Panc1 (cell line): ENCODE measurements at regions of chrX and their contacts with region 1.

Region 1: DNA sequence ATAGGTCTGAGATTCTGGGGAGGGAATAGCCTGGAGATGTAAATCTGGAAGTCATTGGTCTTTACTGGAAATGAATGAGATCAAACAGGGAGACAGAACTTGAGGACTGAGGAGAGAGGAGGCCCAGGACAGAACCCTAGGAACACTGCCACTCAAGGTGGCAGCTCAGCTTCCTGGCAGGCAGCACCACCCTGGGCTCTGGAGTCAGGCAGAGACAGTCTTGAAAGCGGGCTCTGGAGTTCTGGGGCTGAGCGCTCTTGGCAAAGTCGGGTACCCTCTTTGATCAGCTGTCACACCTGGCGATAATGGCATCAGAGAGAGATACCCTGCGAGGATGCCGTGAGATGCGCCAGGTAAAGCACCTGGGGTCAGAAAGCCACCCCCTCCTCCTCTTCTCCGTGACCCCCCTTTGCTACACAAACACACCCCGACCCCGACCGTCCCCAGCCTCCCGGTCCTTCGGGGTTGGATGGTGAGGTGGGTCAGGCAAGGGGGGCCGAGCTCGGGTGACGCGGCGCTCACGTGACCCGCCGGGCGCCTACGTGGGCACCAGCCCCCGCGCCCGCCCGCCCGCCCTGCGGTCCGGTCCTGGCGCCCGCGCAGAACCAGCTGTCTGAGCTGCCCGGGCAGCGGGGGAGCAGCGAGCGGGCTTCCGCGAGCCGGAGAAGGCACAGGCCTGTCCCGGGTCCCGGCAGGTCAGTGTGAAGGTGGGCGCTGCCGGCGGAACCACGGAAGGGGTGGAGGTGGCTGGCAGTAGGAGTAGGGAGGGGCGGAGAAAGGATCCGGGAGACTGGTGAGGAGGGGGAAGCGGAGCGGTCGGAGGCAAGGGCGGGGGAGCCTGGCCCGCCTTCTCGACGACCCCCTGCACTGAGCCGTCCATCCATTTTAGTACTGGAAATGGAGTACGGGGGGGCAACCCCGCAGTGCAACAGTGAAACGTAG is at the start of gene TCEAL3:
- DNase-seq: no peak
- ATAC-seq: peak; percentile 91
- H3K4me3 ChIP-seq: peak within 1 kb of the TSS; percentile 62 to 87
- H3K27ac ChIP-seq: peak within 1 kb of the TSS; percentile 79
- H3K4me1 ChIP-seq: peaks cover 9% of the 10 kb centered on the region
- H3K27me3 ChIP-seq: no peaks in the 10 kb centered on the region
- CTCF ChIP-seq: no peak
- total RNA-seq, gene TCEAL3: 23.8 TPM

Region 2: GRCh38 chrX:103549916-103550315 is 57.7 kb before region 1 on chrX:
- CTCF ChIA-PET with region 1: no interaction called
- POLR2A ChIA-PET with region 1: no interaction called
- in situ Hi-C with region 1: no loop called
- intact Hi-C with region 1: no loop called
- DNase-seq: no peak
- ATAC-seq: no peak
- H3K4me3 ChIP-seq: no peak overlapping the region
- H3K27ac ChIP-seq: no peak overlapping the region
- H3K4me1 ChIP-seq: no peaks in the 10 kb centered on the region
- H3K27me3 ChIP-seq: no peaks in the 10 kb centered on the region
- CTCF ChIP-seq: no peak

Region 3: DNA sequence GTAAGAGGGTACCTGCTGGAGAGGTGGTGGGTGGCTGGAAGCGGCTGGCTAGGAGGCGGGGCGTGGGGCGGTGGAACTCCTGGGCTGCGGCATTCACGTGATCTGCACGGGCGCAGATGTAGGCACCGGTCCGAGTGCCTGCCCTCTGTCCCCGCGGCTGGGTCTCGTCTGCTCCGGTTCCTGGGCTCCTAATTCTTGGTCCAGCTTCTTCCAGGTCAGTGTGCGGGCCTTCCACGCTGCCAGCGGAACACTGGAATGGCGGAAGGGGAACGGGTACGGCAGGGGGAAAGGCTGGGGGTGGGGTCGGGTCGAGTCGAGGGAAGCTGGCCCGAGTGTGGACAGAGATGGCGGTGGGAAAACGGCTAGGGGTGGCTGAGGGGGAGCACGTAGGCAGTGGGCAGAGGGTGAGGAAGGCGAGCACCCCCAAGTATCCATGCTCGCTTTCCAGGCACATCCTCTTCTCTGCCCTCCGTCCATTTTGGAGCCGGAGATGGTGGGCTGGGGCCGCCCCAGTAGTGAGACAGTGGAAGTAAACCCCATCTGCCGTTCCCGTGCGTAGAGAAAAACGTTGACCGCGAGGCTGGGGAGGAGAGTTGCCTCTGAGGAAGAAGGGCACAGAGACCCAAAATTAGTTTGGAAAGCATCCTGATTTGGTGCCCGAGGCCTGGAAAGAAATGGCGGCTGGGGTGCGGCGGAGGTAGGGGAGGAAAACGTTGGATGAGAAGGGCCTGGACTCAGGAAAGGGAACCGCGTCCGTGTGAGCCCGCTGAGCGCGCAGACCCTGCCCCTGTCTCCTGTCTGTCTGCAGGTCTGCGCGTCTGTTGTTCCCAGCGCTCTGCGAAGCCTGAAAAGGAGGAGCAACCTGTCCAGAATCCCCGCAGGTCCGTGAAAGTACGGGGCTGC is 22.0 kb before region 1 on chrX and contains the start of gene TCEAL4:
- CTCF ChIA-PET with region 1: no interaction called
- POLR2A ChIA-PET with region 1: interaction called, 10 read pairs
- in situ Hi-C with region 1: no loop called
- intact Hi-C with region 1: no loop called
- DNase-seq: no peak
- ATAC-seq: peak; percentile 96
- H3K4me3 ChIP-seq: peak within 1 kb of the TSS; percentile 81
- H3K27ac ChIP-seq: peak within 1 kb of the TSS; percentile 89
- H3K4me1 ChIP-seq: peaks cover 10% of the 10 kb centered on the region
- H3K27me3 ChIP-seq: no peaks in the 10 kb centered on the region
- CTCF ChIP-seq: no peak
- total RNA-seq, gene TCEAL4: 84.1 TPM